ENCODE measurements at regions of chr10 and their contacts with region 1.

Region 1: GRCh38 chr10:93352638-93353383 is 129.3 kb downstream of the MYOF start:
- DNase-seq: no peak
- ATAC-seq: no peak
- H3K4me3 Mint-ChIP-seq: no peak overlapping the region
- H3K27ac Mint-ChIP-seq: no peak overlapping the region
- H3K4me1 Mint-ChIP-seq: peaks cover 3% of the 10 kb centered on the region
- H3K27me3 Mint-ChIP-seq: no peaks in the 10 kb centered on the region

Region 2: DNA sequence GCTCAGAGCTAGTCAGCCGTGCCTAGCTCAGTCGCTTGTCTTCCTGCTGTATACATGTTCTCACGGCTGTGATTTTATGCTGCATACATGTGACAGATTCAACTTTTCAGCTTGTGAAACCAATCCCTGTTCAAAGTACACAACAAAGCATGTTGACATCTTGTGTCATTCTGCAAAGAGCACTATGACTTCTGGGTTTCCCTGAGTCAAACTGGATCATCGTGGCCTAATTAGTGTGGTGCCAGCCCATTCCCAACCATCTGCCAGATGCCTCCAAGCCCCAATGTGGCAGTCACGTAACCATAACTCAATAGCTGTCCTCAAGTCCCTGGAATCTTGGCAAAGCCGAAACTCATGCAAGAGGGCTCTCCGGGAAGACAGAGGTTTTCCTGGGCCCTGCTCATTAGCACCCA is 15.5 kb before region 1 on chr10:
- CTCF ChIA-PET with region 1: no interaction called
- POLR2A ChIA-PET with region 1: no interaction called
- DNase-seq: no peak
- ATAC-seq: no peak
- H3K4me3 Mint-ChIP-seq: no peak overlapping the region
- H3K27ac Mint-ChIP-seq: no peak overlapping the region
- H3K4me1 Mint-ChIP-seq: no peaks in the 10 kb centered on the region
- H3K27me3 Mint-ChIP-seq: peaks cover 2% of the 10 kb centered on the region

Region 3: GRCh38 chr10:93363891-93364648 is 11.3 kb after region 1 on chr10:
- CTCF ChIA-PET with region 1: interaction called, 11 read pairs
- POLR2A ChIA-PET with region 1: no interaction called
- DNase-seq: no peak
- ATAC-seq: no peak
- H3K4me3 Mint-ChIP-seq: no peak overlapping the region
- H3K27ac Mint-ChIP-seq: no peak overlapping the region
- H3K4me1 Mint-ChIP-seq: peaks cover 6% of the 10 kb centered on the region
- H3K27me3 Mint-ChIP-seq: peaks cover 3% of the 10 kb centered on the region

Region 4: GRCh38 chr10:93370961-93371360 is 18.1 kb after region 1 on chr10:
- CTCF ChIA-PET with region 1: interaction called, 27 read pairs
- POLR2A ChIA-PET with region 1: no interaction called
- DNase-seq: no peak
- ATAC-seq: no peak
- H3K4me3 Mint-ChIP-seq: no peak overlapping the region
- H3K27ac Mint-ChIP-seq: no peak overlapping the region
- H3K4me1 Mint-ChIP-seq: no peaks in the 10 kb centered on the region
- H3K27me3 Mint-ChIP-seq: peaks cover 3% of the 10 kb centered on the region

Region 5: DNA sequence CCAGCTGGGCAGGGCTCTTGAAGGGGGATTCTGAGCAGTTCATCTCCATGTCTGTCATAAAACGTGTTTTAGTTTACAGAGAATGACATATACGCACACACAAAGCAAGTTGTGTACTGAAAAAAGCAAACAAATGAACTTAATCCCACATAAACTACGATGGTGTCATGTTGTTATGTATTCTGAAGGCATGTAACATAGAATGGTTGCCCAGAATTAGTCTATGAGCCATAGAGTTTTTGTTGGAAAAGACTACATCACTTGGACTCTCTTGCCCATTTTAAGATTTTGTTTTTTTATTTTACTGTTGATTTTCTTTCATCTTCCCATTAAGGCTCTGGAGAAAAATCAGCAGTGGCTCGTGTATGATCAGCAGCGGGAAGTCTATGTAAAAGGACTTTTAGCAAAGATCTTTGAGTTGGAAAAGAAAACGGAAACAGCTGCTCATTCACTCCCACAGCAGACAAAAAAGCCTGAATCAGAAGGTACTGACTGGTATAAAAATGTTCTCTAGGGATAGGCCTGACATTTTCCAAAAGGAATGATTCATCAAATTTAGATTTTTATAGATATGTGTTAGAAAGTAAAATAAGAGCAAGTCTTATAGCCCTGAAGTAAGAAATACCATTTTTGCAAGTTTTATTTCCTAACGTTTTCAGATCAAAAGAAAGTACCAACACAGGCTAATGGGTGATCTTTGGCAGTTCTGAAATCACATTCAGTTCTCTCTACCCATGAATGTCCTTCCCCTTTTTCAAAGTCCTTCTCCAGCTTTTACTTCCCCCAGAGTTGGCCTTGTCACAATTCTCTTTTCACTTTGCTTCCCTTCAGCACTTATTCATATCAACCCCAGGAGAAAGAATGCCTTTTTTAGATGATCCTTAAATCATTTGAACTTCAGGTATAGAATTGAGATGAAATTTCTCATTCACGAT is 162.5 kb after region 1 on chr10:
- CTCF ChIA-PET with region 1: interaction called, 13 read pairs
- POLR2A ChIA-PET with region 1: no interaction called
- DNase-seq: no peak
- ATAC-seq: no peak
- H3K4me3 Mint-ChIP-seq: no peak overlapping the region
- H3K27ac Mint-ChIP-seq: no peak overlapping the region
- H3K4me1 Mint-ChIP-seq: no peaks in the 10 kb centered on the region
- H3K27me3 Mint-ChIP-seq: no peaks in the 10 kb centered on the region